T-cell (primary cell): ENCODE measurements at regions of chr6 and their contacts with region 1.

Region 1: DNA sequence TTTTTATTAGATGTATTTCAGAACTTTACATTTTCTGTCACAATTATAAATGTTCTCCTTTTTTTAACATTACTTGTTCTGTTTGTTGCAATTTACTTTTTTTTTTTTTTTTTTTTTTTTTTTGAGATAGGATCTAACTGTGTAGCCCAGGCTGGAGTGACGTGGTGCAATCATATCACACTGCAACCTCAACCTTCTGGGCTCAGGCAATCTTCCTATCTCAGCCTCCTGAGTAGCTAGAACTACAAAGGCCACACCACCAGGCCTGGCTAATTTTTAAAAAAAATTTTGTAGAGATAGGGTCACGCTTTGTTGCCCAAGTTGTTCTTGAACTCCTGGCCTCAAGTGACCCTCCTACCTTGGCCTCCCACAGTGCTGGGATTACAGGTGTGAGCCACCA is 15.1 kb upstream of the MBOAT1 start:
- DNase-seq: no peak
- ATAC-seq: no peak
- H3K4me3 ChIP-seq: no peak overlapping the region
- H3K4me3 Mint-ChIP-seq: no peak overlapping the region
- H3K27ac ChIP-seq: no peak overlapping the region
- H3K27ac Mint-ChIP-seq: no peak overlapping the region
- H3K4me1 ChIP-seq: no peaks in the 10 kb centered on the region
- H3K4me1 Mint-ChIP-seq: no peaks in the 10 kb centered on the region
- H3K27me3 ChIP-seq: no peaks in the 10 kb centered on the region
- H3K27me3 Mint-ChIP-seq: no peaks in the 10 kb centered on the region

Region 2: GRCh38 chr6:19492636-19493405 is 734.5 kb before region 1 on chr6:
- CTCF ChIA-PET with region 1: no interaction called
- POLR2A ChIA-PET with region 1: interaction called in 1 of 2 experiments, 11 read pairs
- DNase-seq: no peak
- ATAC-seq: no peak
- H3K4me3 ChIP-seq: no peak overlapping the region
- H3K4me3 Mint-ChIP-seq: no peak overlapping the region
- H3K27ac ChIP-seq: no peak overlapping the region
- H3K27ac Mint-ChIP-seq: no peak overlapping the region
- H3K4me1 ChIP-seq: no peaks in the 10 kb centered on the region
- H3K4me1 Mint-ChIP-seq: no peaks in the 10 kb centered on the region
- H3K27me3 ChIP-seq: no peaks in the 10 kb centered on the region
- H3K27me3 Mint-ChIP-seq: no peaks in the 10 kb centered on the region

Region 3: GRCh38 chr6:19749722-19750121 is 477.6 kb before region 1 on chr6:
- CTCF ChIA-PET with region 1: no interaction called
- POLR2A ChIA-PET with region 1: no interaction called
- DNase-seq: no peak
- ATAC-seq: no peak
- H3K4me3 ChIP-seq: no peak overlapping the region
- H3K4me3 Mint-ChIP-seq: no peak overlapping the region
- H3K27ac ChIP-seq: no peak overlapping the region
- H3K27ac Mint-ChIP-seq: no peak overlapping the region
- H3K4me1 ChIP-seq: no peaks in the 10 kb centered on the region
- H3K4me1 Mint-ChIP-seq: no peaks in the 10 kb centered on the region
- H3K27me3 ChIP-seq: no peaks in the 10 kb centered on the region
- H3K27me3 Mint-ChIP-seq: no peaks in the 10 kb centered on the region

Region 4: DNA sequence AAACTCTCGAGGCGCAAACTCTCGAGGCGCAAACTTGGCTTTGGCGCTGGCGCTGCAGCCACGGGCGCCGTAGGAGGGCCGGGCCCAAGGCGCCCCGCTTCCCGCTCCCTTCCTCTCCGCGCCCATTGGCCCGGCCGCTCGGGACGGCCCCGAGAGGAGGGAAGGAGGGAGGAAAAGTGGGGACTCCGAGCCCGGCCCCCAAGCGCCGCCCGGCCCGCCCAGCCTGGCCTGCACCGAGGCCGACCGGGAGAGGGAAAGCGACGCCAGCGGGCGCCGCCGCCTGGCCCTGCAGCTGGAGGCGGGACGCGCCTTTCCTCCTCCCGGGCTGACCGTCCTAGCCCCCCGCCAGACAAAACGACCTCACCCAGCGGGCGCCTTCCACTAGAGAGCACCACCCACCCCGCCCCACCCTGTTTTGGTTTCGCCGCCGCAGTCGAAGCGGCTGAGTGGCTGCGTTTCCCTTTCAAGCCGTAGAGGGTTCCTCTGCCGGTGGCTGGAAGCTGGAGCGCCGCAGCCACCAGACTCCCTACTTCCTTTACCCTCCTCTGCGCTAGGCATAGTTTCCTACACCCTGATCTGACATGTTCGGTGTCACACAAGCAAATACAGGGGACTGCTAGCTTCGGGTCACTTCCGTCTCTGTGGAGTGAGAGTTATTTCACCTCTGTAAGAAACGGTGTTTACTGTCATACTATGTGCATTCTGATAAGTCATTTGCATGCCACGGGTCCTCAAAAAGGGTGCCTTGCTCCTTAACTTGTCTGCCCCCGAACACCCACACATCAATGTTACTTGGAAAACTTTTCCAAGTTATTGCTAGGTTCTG is 14.7 kb before region 1 on chr6 and contains the start of gene MBOAT1:
- CTCF ChIA-PET with region 1: no interaction called
- POLR2A ChIA-PET with region 1: no interaction called
- DNase-seq: peak; percentile 16 to 77 (median 46)
- ATAC-seq: peak; percentile 76 to 79 (median 78)
- H3K4me3 ChIP-seq: peak within 1 kb of the TSS; percentile 54 to 78
- H3K4me3 Mint-ChIP-seq: peak within 1 kb of the TSS; percentile 92 to 94 (median 93)
- H3K27ac ChIP-seq: peak within 1 kb of the TSS; percentile 79
- H3K27ac Mint-ChIP-seq: peak within 1 kb of the TSS; percentile 92 to 98
- H3K4me1 ChIP-seq: peaks cover 13 to 25% of the 10 kb centered on the region in 2 experiments
- H3K4me1 Mint-ChIP-seq: peaks cover 35 to 47% (median 43%) of the 10 kb centered on the region in 3 donors
- H3K27me3 ChIP-seq: no peaks in the 10 kb centered on the region
- H3K27me3 Mint-ChIP-seq: no peaks in the 10 kb centered on the region
- total RNA-seq, gene MBOAT1: 8.3 to 21.5 (median 12.0) TPM

Region 5: DNA sequence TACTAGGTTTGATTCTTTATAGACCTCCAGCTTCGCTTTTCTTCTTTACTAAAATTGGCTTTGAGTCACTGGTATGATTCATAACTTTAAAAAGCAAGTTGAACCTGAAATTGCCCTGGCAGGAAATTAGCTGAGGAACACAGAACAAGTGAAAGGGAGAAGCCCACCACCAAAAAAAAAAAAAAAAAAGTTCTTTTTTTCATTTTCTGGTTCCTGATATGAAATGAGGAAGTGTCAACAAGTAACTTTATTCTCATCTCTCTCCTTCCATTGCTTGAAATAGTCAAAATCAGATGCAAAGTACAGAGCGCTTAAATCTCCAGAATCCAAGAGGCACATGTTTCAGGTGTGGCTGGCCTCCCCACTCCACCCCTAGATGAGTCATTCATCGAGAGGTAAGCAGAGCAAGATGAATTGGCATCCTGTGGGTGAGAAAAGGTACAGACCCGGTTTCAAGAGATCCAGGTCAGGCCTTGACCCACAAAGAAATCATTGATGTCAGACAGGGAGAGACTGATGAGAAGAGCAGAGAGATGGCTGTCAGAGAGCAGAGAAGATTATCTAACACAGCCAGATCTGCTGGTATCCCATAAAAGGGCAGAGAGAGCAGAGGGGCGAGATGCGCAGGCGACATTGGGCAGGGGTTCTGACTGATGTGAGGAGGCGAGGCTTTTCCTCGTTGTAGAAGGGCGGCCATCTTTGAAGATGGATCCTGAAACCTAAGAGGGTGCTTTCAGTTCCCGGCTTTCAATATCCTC is 39.7 kb after region 1 on chr6:
- CTCF ChIA-PET with region 1: no interaction called
- POLR2A ChIA-PET with region 1: no interaction called
- DNase-seq: no peak
- ATAC-seq: no peak
- H3K4me3 ChIP-seq: no peak overlapping the region
- H3K4me3 Mint-ChIP-seq: no peak overlapping the region
- H3K27ac ChIP-seq: no peak overlapping the region
- H3K27ac Mint-ChIP-seq: no peak overlapping the region
- H3K4me1 ChIP-seq: no peaks in the 10 kb centered on the region
- H3K4me1 Mint-ChIP-seq: peaks cover 0 to 6% (median 0%) of the 10 kb centered on the region in 3 donors
- H3K27me3 ChIP-seq: peaks cover 0 to 5% of the 10 kb centered on the region in 2 experiments
- H3K27me3 Mint-ChIP-seq: no peaks in the 10 kb centered on the region